B cell (primary cell): ENCODE measurements at regions of chr2 and their contacts with region 1.

Region 1: DNA sequence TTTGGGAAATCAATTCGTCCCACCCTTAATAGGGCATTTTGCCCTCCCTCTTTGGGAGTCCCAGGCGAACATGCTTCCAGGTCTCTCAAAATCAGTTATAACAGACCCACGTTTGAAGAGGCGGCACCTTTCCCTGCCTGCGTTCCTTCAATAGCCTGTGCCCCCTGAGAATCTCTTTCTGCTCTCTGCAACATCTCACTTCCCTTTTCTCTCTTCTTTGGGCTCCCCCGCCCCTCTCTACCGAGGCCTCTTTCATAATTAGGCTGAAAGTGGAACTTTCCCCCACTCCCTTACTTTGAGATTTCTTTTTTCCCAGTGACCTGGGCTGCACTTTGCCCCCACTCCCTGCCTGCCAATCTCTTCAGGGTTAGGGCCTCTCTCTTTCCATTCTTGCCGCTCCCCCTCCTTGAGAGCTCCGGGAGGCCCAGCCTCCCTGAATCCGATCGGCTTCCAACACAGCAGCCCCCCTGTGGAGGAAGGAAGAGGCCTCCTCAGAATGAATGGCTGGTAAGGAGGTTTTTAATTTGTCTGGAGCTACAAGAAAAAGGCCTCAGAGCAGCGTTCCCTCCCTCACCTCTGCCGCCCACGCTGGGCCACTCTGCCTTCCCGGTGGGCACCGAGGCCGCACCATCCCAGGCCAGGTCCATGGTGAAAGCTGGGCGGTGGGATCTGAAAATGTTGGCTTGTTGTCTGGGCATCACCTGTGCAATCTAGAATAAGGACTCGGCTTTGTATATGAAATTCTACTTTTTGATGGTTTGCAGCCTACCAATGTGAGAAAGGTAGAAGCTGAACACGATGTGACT is 162.6 kb upstream of the SIX3 start:
- DNase-seq: peak; percentile 84
- ATAC-seq: peak; percentile 95
- H3K4me3 ChIP-seq: peak overlapping the region; percentile 26 to 67 (median 53)
- H3K4me3 Mint-ChIP-seq: peak overlapping the region; percentile 84
- H3K27ac ChIP-seq: peak overlapping the region; percentile 23 to 24
- H3K27ac Mint-ChIP-seq: peak overlapping the region; percentile 89
- H3K4me1 ChIP-seq: peaks cover 26 to 33% of the 10 kb centered on the region in 2 donors
- H3K4me1 Mint-ChIP-seq: peaks cover 36% of the 10 kb centered on the region
- H3K27me3 ChIP-seq: no peaks in the 10 kb centered on the region
- H3K27me3 Mint-ChIP-seq: no peaks in the 10 kb centered on the region
- CTCF ChIP-seq: no peak

Region 2: DNA sequence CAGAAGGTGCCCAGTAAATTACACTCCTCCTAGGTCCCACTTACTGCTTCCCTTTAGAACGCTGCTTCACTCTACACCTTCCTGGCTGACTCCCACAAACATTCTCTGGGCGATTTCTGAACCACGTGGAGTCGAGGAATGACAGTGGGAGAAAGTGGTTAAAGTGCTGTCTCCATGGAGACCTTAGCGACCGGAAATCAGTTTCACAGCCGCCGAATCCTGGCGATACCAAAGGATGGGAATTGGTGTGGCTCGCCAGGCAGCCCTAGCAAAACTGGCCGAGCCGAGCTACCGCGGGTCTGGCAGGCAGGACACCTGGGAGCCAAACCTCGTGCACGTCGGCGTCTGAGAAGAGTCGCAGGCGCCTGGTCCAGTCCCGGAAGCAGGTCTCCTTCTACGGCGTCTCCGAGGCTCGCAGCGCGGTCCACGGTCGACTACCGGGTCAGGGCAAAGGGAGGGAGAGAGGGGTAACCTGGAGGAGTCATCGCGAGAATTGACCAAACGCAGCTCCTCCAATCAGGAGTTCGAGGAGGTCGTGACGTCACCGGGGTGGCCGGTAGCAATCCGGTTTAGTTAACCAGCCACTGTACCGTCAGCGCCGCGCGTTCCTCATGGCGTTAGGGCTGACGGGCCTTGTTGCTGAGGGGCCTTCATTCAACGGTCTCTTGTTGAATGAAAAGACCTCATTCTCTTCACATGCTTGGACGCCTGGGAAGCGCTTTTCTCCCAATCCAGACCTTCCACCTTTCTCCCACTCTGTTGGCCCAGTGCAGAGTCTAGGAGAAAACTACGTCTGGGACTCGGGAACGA is 1183.1 kb before region 1 on chr2 and contains the start of gene THADA:
- CTCF ChIA-PET with region 1: no interaction called
- POLR2A ChIA-PET with region 1: no interaction called
- intact Hi-C with region 1: loop called (anchors 5 kb)
- DNase-seq: peak; percentile 98
- ATAC-seq: peak; percentile 98
- H3K4me3 ChIP-seq: peak within 1 kb of the TSS; percentile 69 to 94 (median 80)
- H3K4me3 Mint-ChIP-seq: peak within 1 kb of the TSS; percentile 98
- H3K27ac ChIP-seq: peak within 1 kb of the TSS; percentile 94
- H3K27ac Mint-ChIP-seq: peak within 1 kb of the TSS; percentile 96
- H3K4me1 ChIP-seq: peaks cover 12 to 21% of the 10 kb centered on the region in 2 donors
- H3K4me1 Mint-ChIP-seq: peaks cover 24% of the 10 kb centered on the region
- H3K27me3 ChIP-seq: no peaks in the 10 kb centered on the region
- H3K27me3 Mint-ChIP-seq: peaks cover 3% of the 10 kb centered on the region
- CTCF ChIP-seq: no peak
- total RNA-seq, gene THADA: 48.5 and 53.7 TPM in 2 replicates

Region 3: GRCh38 chr2:44707945-44708660 is 70.8 kb before region 1 on chr2:
- CTCF ChIA-PET with region 1: no interaction called
- POLR2A ChIA-PET with region 1: no interaction called
- intact Hi-C with region 1: loop called (anchors 1 kb)
- DNase-seq: peak; percentile 84
- ATAC-seq: peak; percentile 79
- H3K4me3 ChIP-seq: peak overlapping the region; percentile 32 to 71 (median 58)
- H3K4me3 Mint-ChIP-seq: peak overlapping the region; percentile 85
- H3K27ac ChIP-seq: peak overlapping the region; percentile 78 to 80
- H3K27ac Mint-ChIP-seq: peak overlapping the region; percentile 91
- H3K4me1 ChIP-seq: peaks cover 37 to 47% of the 10 kb centered on the region in 2 donors
- H3K4me1 Mint-ChIP-seq: peaks cover 54% of the 10 kb centered on the region
- H3K27me3 ChIP-seq: no peaks in the 10 kb centered on the region
- H3K27me3 Mint-ChIP-seq: no peaks in the 10 kb centered on the region
- CTCF ChIP-seq: no peak

Region 4: GRCh38 chr2:44802777-44803424 is 24.0 kb after region 1 on chr2:
- CTCF ChIA-PET with region 1: no interaction called
- POLR2A ChIA-PET with region 1: no interaction called
- intact Hi-C with region 1: loop called (anchors 1 kb)
- DNase-seq: peak; percentile 41
- ATAC-seq: no peak
- H3K4me3 ChIP-seq: peak overlapping the region in 3 of 5 experiments; percentile 27 to 62 (median 35)
- H3K4me3 Mint-ChIP-seq: peak overlapping the region; percentile 74
- H3K27ac ChIP-seq: no peak overlapping the region
- H3K27ac Mint-ChIP-seq: no peak overlapping the region
- H3K4me1 ChIP-seq: peaks cover 32 to 50% of the 10 kb centered on the region in 2 donors
- H3K4me1 Mint-ChIP-seq: peaks cover 34% of the 10 kb centered on the region
- H3K27me3 ChIP-seq: peaks cover 0 to 89% (median 81%) of the 10 kb centered on the region in 4 experiments
- H3K27me3 Mint-ChIP-seq: peaks cover 87% of the 10 kb centered on the region
- CTCF ChIP-seq: no peak

Region 5: DNA sequence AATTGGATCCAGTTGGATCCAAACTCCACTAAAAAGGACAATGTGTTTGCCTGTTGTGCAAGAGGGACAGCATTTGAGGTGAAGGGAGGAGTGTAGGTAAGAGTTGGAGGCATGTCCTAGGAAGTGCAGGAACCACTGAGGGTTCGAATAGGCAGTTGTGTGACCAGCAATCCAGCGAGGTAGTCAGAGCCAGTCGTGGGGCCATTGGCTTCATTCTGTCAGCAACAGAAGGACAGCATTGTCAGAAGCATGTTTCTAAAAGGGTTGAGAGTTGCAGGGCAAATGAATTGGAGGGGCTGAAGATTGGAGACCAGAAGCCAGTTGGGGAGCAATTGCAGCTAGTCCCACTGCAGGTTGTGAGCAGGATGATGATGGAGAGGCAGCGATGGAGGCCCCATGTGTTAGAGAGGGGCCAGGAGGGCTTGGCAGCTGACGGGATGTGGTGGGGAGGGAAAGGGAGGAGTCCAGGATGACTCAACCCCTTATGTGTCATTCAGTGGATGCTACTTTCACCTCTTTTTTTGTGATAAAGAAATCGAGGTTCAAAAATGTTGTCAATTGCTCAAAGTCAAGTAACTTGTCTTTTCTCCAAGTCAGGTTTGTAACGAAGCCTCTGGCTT is 65.9 kb after region 1 on chr2:
- CTCF ChIA-PET with region 1: no interaction called
- POLR2A ChIA-PET with region 1: no interaction called
- intact Hi-C with region 1: no loop called
- DNase-seq: no peak
- ATAC-seq: no peak
- H3K4me3 ChIP-seq: no peak overlapping the region
- H3K4me3 Mint-ChIP-seq: no peak overlapping the region
- H3K27ac ChIP-seq: no peak overlapping the region
- H3K27ac Mint-ChIP-seq: no peak overlapping the region
- H3K4me1 ChIP-seq: no peaks in the 10 kb centered on the region
- H3K4me1 Mint-ChIP-seq: no peaks in the 10 kb centered on the region
- H3K27me3 ChIP-seq: peaks cover 0 to 9% (median 0%) of the 10 kb centered on the region in 4 experiments
- H3K27me3 Mint-ChIP-seq: peaks cover 50% of the 10 kb centered on the region
- CTCF ChIP-seq: no peak